Ovary (tissue), 10 donors: ENCODE measurements at regions of chr14 and their contacts with region 1.

Region 1: DNA sequence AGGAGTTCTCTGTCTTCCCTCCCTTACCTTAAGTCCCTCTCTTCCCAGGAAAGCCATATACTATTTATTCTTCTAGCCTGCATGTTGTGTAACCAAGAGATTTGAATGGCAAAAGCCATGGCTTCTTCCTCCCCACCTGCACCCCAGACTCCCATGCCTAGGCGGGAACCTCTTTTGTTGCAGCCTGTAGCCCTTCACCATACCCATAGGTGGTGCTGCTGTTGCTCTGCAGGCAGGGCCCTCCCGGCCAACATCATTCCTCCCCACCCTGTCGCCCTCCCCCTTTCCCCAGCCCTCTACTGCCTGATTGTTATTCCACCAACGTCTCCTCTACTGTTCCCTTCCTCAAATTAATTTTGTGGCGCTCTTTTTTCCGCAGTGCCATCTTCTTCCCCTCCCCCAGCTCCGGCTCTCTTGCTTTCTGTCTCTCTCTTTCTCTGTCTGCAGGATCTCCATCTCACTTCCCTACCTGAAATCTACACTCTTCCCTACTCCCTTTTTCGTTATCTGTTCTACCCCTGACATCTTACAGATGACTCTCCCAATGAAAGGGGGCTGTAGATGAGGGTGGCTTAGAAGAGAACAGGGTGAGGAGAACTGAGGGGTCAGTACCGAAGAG is 13.8 kb downstream of the NGDN start:
- DNase-seq: no peak
- H3K4me3 ChIP-seq: no peak overlapping the region
- H3K27ac ChIP-seq: no peak overlapping the region
- H3K4me1 ChIP-seq: no peaks in the 10 kb centered on the region
- H3K27me3 ChIP-seq: no peaks in the 10 kb centered on the region
- CTCF ChIP-seq: no peak
- EP300 ChIP-seq: no peak
- POLR2A ChIP-seq: no peak

Region 2: DNA sequence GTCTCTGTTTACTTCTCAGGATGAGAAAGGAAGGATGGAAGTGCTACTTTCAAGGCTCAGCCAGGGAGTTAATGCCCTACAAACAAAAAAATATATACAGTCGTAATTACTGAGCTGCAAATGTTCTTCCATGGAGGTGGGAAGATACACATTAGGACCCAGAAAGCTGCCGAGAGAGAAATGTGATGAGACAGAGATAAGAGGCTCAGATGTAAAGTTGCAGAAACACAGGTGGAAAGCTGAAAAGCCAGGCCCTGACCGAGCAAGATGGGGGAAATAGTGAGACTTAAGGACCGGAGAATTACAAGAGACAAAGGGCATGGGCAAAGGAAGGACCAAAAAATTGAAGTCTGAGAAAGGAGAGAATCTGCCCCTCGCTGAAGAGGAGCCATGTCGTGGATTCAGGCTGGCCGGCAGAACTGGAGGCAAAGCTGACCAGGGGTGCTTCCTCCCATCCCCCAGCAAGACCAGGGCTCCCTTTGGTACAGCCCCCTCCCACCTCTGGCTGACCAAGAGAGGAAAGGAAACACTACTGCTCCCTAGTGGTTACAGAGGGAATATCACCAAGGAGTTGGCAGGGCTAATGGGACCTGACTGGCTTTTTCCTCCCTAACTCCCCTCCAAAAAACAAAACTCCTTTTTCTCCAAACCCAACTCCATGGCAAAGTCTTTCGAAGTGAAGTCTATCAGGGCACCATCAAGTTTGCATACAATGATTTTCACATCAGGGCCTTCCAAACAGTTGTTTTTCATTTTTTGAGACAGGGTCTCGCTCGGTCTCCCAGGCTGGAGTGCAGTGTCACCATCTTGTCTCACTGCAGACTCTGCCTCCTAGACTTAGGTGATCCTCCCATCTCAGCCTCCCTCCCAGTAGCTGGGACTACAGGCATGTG is 56.1 kb after region 1 on chr14:
- intact Hi-C with region 1: loop called in 3 of 4 experiments (anchors 5 to 10 kb)
- DNase-seq: peak in 1 of 5 donors; percentile 40
- H3K4me3 ChIP-seq: no peak overlapping the region
- H3K27ac ChIP-seq: no peak overlapping the region
- H3K4me1 ChIP-seq: no peaks in the 10 kb centered on the region
- H3K27me3 ChIP-seq: no peaks in the 10 kb centered on the region
- CTCF ChIP-seq: peak; percentile 42 to 55 (median 42)
- EP300 ChIP-seq: no peak
- POLR2A ChIP-seq: no peak

Region 3: GRCh38 chr14:23670481-23670880 is 187.1 kb after region 1 on chr14:
- intact Hi-C with region 1: no loop called
- DNase-seq: no peak
- H3K4me3 ChIP-seq: no peak overlapping the region
- H3K27ac ChIP-seq: no peak overlapping the region
- H3K4me1 ChIP-seq: peaks cover 4% of the 10 kb centered on the region
- H3K27me3 ChIP-seq: no peaks in the 10 kb centered on the region
- CTCF ChIP-seq: no peak
- EP300 ChIP-seq: no peak
- POLR2A ChIP-seq: no peak

Region 4: GRCh38 chr14:23942387-23942986 is 459.1 kb after region 1 on chr14:
- intact Hi-C with region 1: loop called in 1 of 4 experiments (anchors 10 kb)
- DNase-seq: no peak
- H3K4me3 ChIP-seq: no peak overlapping the region
- H3K27ac ChIP-seq: no peak overlapping the region
- H3K4me1 ChIP-seq: no peaks in the 10 kb centered on the region
- H3K27me3 ChIP-seq: no peaks in the 10 kb centered on the region
- CTCF ChIP-seq: no peak
- EP300 ChIP-seq: no peak
- POLR2A ChIP-seq: no peak